Psoas muscle (tissue), 8 donors: ENCODE measurements at regions of chr11 and their contacts with region 1.

Region 1: GRCh38 chr11:46322759-46323158 is 24.5 kb upstream of the DGKZ start:
- DNase-seq: no peak
- ATAC-seq: no peak
- H3K4me3 ChIP-seq: no peak overlapping the region
- H3K27ac ChIP-seq: no peak overlapping the region
- H3K4me1 ChIP-seq: no peaks in the 10 kb centered on the region
- H3K27me3 ChIP-seq: peaks cover 0 to 2% (median 0%) of the 10 kb centered on the region in 3 donors
- CTCF ChIP-seq: no peak

Region 2: GRCh38 chr11:45964911-45965389 is 357.8 kb before region 1 on chr11:
- intact Hi-C with region 1: loop called in 1 of 2 experiments (anchors 10 kb)
- DNase-seq: peak in 1 of 2 donors; percentile 31
- ATAC-seq: peak; percentile 83 to 93 (median 90)
- H3K4me3 ChIP-seq: no peak overlapping the region
- H3K27ac ChIP-seq: no peak overlapping the region
- H3K4me1 ChIP-seq: no peaks in the 10 kb centered on the region
- H3K27me3 ChIP-seq: no peaks in the 10 kb centered on the region
- CTCF ChIP-seq: peak; percentile 83

Region 3: DNA sequence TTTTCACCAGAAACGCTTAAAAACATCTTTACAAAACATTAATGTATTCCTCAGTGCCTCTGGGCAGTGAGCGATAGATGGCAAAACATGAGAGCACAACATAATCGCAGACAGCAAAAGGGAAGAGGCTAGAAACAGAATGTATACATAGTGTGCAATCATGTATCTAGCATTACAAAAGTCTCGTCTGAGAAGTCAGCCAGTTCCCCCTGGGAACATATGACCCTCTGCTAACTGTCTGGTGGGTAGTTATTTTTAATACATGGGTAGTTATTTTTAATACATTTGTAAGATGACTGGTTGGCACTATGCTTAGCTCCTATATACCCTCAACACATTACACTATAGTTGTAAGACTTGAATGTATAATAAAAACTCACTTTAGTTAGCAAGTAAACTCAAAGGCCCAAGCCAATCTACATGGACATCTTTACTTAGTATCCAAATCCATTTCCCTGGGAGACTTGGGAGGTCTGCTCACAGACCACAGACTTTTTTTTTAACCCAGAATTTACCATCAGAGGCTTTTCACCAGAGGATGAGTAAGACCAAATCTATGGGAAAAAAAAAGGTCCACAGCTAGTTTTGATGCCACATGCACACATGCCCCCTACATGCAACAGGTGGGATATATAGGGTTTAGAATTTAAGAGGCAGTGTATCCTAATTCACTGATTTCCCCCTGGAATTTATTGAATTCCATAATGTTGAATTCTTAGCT is 199.4 kb after region 1 on chr11:
- intact Hi-C with region 1: no loop called
- DNase-seq: no peak
- ATAC-seq: peak in 3 of 4 donors; percentile 49 to 82 (median 77)
- H3K4me3 ChIP-seq: no peak overlapping the region
- H3K27ac ChIP-seq: no peak overlapping the region
- H3K4me1 ChIP-seq: peaks cover 30% of the 10 kb centered on the region
- H3K27me3 ChIP-seq: no peaks in the 10 kb centered on the region
- CTCF ChIP-seq: no peak